A673 (cell line): ENCODE measurements at regions of chr9 and their contacts with region 1.

Region 1: GRCh38 chr9:132387133-132387532 is 19.5 kb downstream of the TTF1 start:
- DNase-seq: no peak
- H3K4me3 ChIP-seq: no peak overlapping the region
- H3K27ac ChIP-seq: no peak overlapping the region
- H3K4me1 ChIP-seq: no peaks in the 10 kb centered on the region
- H3K27me3 ChIP-seq: no peaks in the 10 kb centered on the region
- CTCF ChIP-seq: no peak

Region 2: DNA sequence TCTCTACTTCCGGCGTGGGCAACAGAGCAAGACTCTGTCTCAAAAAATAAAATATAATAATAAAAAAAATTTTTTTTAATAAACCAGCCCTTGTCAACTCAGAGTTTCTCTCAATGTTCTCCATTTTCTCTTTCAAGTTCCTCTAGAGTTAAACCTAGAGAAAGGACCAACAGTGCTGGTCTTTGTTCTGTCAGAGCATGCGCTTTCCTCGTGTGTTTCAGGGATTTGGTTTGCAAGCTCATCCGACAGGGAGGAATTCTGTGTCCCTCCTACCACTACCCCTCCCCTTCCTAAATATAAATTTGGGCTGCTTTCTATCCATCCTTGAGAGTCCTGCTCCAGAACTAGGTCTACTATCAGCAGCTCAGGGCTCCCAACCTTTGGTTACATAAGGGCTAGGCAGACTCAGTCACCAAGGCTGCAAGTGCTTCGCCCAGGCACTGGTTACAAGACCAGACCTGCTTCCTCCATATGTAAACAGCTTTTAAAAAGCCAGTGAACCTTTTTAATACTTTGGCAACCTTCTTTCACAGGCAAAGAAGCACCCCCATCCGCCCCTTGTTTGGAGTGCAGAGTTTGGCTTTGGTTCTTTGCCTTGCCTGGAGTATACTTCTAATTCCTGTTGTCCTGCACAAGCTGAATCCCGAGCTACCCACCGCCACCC is 45.8 kb before region 1 on chr9:
- CTCF ChIA-PET with region 1: no interaction called
- POLR2A ChIA-PET with region 1: no interaction called
- intact Hi-C with region 1: loop called (anchors 5 kb)
- DNase-seq: no peak
- H3K4me3 ChIP-seq: no peak overlapping the region
- H3K27ac ChIP-seq: no peak overlapping the region
- H3K4me1 ChIP-seq: no peaks in the 10 kb centered on the region
- H3K27me3 ChIP-seq: no peaks in the 10 kb centered on the region
- CTCF ChIP-seq: no peak